IMR-90 (cell line): ENCODE measurements at regions of chr11 and their contacts with region 1.

Region 1: GRCh38 chr11:75966546-75967287 is 151.7 kb downstream of the UVRAG start:
- DNase-seq: peak; percentile 84
- ATAC-seq: peak; percentile 79
- H3K4me3 ChIP-seq: no peak overlapping the region
- H3K27ac ChIP-seq: peak overlapping the region; percentile 41; the same call in 1 of the 2 replicates
- H3K4me1 ChIP-seq: peaks cover 10% of the 10 kb centered on the region
- H3K27me3 ChIP-seq: no peaks in the 10 kb centered on the region
- CTCF ChIP-seq: no peak
- POLR2A ChIP-seq: no peak
- RAD21 ChIP-seq: no peak

Region 2: GRCh38 chr11:75850787-75851186 is 115.9 kb before region 1 on chr11:
- CTCF ChIA-PET with region 1: no interaction called
- POLR2A ChIA-PET with region 1: no interaction called
- dilution Hi-C with region 1: no loop called
- in situ Hi-C with region 1: no loop called
- intact Hi-C with region 1: no loop called
- DNase-seq: no peak
- ATAC-seq: no peak
- H3K4me3 ChIP-seq: no peak overlapping the region
- H3K27ac ChIP-seq: no peak overlapping the region
- H3K4me1 ChIP-seq: no peaks in the 10 kb centered on the region
- H3K27me3 ChIP-seq: no peaks in the 10 kb centered on the region
- CTCF ChIP-seq: no peak
- POLR2A ChIP-seq: no peak
- RAD21 ChIP-seq: no peak

Region 3: DNA sequence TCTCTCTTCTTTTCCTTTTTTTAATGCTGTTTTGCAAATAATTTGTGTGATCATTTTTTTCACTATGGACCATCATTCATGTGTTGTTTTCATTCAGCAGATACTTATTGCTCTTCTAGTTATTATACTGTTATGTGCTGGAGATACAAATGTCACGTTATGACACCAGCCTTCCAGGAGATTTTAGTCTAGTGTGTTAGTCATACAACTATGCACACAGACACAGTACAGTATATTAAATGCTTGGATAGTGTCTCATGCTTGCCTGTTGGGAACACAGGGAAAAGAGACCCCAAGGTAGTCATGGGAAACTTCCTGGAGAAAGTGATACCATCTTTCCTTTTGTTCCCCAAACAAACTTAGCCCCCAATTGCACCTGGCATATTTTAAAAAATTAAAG is 35.6 kb before region 1 on chr11:
- CTCF ChIA-PET with region 1: no interaction called
- POLR2A ChIA-PET with region 1: no interaction called
- dilution Hi-C with region 1: no loop called
- in situ Hi-C with region 1: no loop called
- intact Hi-C with region 1: loop called (anchors 5 kb)
- DNase-seq: peak; percentile 68
- ATAC-seq: peak; percentile 83
- H3K4me3 ChIP-seq: no peak overlapping the region
- H3K27ac ChIP-seq: no peak overlapping the region
- H3K4me1 ChIP-seq: 0 out of 2 replicates have a peak, but pooled peaks cover 2% of the 10 kb centered on the region
- H3K27me3 ChIP-seq: no peaks in the 10 kb centered on the region
- CTCF ChIP-seq: no peak
- POLR2A ChIP-seq: no peak
- RAD21 ChIP-seq: no peak